ENCODE measurements at regions of chr12 and their contacts with region 1.

Region 1: DNA sequence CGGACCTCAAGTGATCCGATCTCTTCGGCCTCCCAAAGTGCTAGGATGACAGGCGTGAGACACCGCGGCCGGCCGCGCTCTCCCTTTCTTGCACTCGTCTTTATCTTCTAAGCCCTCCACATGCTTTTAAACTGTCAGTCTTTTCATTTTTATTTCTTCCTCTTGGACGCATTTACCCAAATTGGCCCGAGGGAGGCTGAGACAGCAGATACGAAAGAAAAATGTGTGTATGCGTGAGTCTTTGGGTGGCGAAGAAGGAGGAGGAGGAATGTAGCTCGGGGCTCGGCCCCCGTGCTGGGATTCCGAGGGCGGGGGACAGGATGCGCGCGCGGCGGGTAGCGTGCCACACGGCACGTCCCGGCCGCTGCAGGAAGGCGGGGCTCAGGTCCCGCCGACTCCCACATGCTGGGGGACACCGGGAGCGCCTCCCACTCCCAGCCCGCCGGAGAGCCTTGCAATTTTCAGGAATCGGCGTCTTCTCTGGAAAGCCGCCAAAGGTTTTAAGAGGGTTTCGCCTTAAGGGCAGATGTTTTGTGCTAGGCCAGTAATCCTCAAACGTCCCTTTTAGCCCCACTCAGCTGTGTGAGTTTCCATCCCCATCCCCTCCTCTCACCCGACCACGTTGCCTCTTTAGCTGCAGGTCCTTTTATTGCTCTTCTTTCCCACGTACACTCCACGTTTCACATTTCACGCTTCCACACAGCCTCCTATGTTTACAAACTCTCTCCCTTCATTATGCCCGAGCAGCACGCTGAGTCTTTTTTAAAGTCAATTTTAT is 34.7 kb upstream of the SLC2A3 start:
- DNase-seq: peak; percentile 88

Region 2: DNA sequence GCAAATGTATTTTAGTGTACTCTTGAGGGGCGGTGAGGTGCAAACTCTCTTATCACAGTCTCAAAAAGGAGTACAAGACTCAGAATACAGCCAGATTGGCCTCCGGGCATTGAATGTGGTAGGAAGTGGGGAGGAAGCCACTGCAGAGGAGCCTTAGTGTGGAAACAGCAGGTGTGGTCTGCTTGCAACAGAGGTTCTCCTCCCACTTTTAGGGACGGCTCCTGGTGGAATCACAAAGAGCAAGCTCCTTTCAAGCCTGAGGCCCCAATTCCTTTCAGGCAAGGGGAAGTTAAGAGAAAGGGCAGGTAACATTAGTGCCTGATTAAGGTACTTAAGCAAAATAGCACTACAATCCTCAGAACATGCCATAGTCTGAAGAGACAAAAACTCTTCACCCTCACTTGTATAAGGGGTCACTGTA is 11.0 kb before region 1 on chr12:
- CTCF ChIA-PET with region 1: no interaction called
- POLR2A ChIA-PET with region 1: interaction called, 19 read pairs
- DNase-seq: peak; percentile 8

Region 3: GRCh38 chr12:7995266-7995963 is 24.8 kb after region 1 on chr12:
- CTCF ChIA-PET with region 1: interaction called, 10 read pairs
- POLR2A ChIA-PET with region 1: interaction called, 8 read pairs
- DNase-seq: peak; percentile 46

Measured in HEK293T (cell line).